SK-N-SH (cell line): ENCODE measurements at regions of chr1 and their contacts with region 1.

Region 1: GRCh38 chr1:156751758-156752757 is 583 bp upstream of the HDGF start:
- DNase-seq: peak; percentile 98
- H3K4me3 ChIP-seq: peak overlapping the region; percentile 78 to 98
- H3K27ac ChIP-seq: peak overlapping the region; percentile 100
- H3K4me1 ChIP-seq: peaks cover 27 to 39% of the 10 kb centered on the region in 2 experiments
- H3K27me3 ChIP-seq: no peaks in the 10 kb centered on the region
- CTCF ChIP-seq: no peak
- EP300 ChIP-seq: peak in 1 of 2 experiments; percentile 39; a peak in 1 of 4 replicates
- RAD21 ChIP-seq: no peak

Region 2: DNA sequence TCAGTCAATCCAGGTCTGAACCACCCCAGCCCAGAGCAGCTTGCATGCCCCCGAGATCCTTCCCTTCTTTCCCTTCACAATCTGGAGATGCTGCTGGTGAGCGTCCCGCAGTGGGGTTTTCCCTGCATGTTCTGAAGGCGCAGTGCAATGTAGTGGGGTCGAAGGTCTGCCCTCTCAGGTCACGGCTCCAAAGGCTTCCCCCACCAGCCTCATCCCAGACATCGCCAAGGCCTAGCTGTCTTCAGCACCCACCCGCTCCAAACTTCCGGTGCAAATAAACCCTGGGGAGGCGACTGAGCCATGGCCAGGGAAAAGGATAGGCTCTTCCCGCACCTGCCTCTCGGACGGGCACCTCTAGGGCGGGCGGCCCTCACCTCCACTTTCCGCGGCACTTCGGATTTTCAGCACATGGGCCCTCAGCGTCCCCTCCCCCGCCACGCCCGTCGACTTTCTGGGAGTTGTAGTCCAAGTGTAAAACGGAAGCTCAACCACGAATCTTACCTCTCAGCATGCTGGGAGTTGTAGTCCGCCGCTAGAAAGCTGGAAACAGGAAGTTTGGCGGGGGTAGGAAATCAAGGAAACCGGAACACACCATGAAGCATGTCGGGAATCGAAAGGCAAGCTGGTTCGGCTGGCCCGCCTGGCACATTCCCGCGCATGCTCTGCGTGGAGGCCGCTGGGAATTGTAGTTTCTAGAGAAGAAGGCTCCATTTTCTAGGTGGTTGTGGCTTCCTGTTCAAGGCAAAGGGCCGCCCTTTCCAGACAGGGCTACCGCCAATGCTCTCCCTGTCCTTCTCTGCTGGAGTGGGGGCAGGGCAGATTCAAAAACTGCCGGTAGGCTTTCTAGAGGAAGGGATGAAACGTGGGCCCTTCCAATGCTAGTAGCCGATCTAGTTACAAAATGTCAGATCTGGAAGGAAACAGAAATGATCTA is 11.1 kb before region 1 on chr1 and contains the start of gene MRPL24:
- CTCF ChIA-PET with region 1: interaction called, 4 read pairs
- POLR2A ChIA-PET with region 1: interaction called, 17 read pairs
- DNase-seq: peak; percentile 91
- H3K4me3 ChIP-seq: peak within 1 kb of the TSS; percentile 83 to 94
- H3K27ac ChIP-seq: peak within 1 kb of the TSS; percentile 82 to 92
- H3K4me1 ChIP-seq: peaks cover 9 to 13% of the 10 kb centered on the region in 2 experiments
- H3K27me3 ChIP-seq: no peaks in the 10 kb centered on the region
- CTCF ChIP-seq: no peak
- EP300 ChIP-seq: peak in 1 of 2 experiments; percentile 31; a peak in 2 of 4 replicates
- RAD21 ChIP-seq: no peak; the same call in 1 of the 2 replicates
- polyA plus RNA-seq, gene MRPL24: 149 and 171 TPM in 2 replicates

Region 3: DNA sequence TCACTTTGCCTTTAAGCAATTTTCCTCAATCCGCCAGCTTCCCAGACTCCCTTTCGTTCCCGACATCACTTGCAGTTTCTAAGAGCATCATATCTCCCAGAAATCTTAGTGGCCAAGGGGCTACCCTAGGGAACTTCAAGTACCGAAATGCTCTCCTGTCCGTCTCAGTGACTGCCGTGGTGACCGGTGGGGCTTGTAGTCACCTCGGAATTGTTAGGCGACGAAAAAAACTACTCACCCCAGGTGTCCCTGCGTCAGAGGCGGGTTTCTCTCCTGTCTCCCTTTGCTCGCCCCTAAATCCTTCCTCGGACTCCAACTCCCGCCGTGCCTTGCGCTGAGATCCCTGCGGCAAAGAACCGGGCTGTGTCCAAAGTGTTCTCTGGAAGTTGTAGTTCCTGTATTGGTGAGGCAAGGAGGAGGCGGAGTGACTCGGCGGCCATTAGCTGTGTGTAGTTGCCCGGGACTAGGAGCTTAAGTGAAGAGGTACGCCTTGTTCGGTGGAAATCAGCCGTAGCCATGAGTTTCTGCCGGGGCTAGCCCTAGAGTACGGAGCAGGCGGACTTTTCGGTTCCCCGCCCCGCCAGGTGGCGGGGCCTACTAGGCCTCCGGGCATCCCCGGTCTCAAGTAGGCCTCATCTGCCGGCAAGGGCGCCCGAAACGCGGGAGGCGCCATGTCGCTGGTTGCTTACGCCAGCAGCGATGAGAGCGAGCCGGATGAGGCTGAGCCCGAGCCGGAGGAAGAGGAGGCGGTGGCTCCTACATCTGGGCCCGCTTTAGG is 15.2 kb after region 1 on chr1 and contains the start of gene PRCC:
- CTCF ChIA-PET with region 1: interaction called, 8 read pairs
- POLR2A ChIA-PET with region 1: interaction called, 26 read pairs
- DNase-seq: peak; percentile 87
- H3K4me3 ChIP-seq: peak within 1 kb of the TSS; percentile 72 to 86
- H3K27ac ChIP-seq: peak within 1 kb of the TSS; percentile 77 to 90
- H3K4me1 ChIP-seq: peaks cover 23 to 26% of the 10 kb centered on the region in 2 experiments; a peak in 3 of 4 replicates
- H3K27me3 ChIP-seq: no peaks in the 10 kb centered on the region
- CTCF ChIP-seq: 0 out of 2 replicates have a peak, but pooled peaks have one; percentile 7
- EP300 ChIP-seq: peak; percentile 10 to 20; a peak in 2 of 4 replicates
- RAD21 ChIP-seq: peak; percentile 29; the same call in 1 of the 2 replicates
- polyA plus RNA-seq, gene PRCC: 39.2 and 51.8 TPM in 2 replicates

Region 4: DNA sequence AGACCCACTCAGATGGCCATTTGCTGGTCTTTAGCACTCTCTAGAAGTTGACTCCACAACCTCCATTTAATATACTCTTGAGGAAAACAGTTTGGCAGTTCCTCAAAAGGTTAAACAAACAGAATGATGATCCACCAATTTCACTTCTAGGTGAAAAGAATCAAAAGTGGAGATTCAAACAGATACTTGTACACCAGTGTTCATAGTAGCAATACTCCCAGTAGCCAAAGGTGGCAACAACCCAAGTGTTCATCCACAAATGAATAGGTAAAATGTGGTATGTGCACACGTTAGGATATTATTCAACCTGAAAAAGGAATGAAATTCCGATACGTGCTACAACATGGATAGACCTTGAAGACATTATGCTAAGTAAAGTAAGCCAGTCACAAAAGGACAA is 21.5 kb after region 1 on chr1:
- CTCF ChIA-PET with region 1: interaction called, 5 read pairs
- POLR2A ChIA-PET with region 1: interaction called, 26 read pairs
- DNase-seq: no peak
- H3K4me3 ChIP-seq: no peak overlapping the region
- H3K27ac ChIP-seq: peak overlapping the region; percentile 29 to 93; a peak in 3 of 4 replicates
- H3K4me1 ChIP-seq: peaks cover 27 to 41% of the 10 kb centered on the region in 2 experiments; a peak in 3 of 4 replicates
- H3K27me3 ChIP-seq: no peaks in the 10 kb centered on the region
- CTCF ChIP-seq: peak; percentile 18; the same call in 1 of the 2 replicates
- EP300 ChIP-seq: no peak
- RAD21 ChIP-seq: no peak